ENCODE measurements at regions of chr16 and their contacts with region 1.

Region 1: DNA sequence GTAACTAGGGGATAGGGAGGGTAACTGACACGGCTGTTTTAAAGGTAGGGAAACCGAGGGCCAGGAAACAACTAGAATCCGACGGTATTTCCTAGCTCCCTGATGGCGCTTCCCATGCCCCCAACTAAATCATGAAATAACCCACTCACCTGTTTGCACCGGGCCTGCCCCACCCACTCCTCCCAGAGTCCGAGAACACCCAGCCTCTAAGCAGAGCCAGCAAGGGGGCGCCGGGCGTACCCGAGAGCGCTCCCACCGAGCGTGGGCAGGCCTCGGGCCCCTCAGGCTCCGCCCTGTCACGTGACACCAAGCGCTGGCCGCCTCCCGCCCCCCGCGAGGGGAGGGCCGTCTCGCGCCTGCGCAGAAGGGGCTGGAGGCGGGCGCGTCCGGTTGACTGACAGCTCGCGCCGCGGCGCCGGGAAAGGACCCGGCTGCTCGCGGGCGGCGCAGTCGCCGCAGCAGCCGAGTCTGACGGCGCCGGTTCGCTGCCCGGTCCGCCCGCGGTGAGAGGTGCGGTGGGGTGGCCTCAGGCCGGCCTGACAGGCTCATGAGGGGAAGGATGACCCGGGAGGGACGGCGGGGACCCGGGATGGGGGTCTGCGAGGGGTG is at the start of gene KIAA0513:
- DNase-seq: peak; percentile 65
- ATAC-seq: peak; percentile 88
- H3K4me3 ChIP-seq: peak within 1 kb of the TSS; percentile 82
- H3K27ac ChIP-seq: peak within 1 kb of the TSS; percentile 6
- H3K4me1 ChIP-seq: peaks cover 20% of the 10 kb centered on the region
- H3K27me3 ChIP-seq: no peaks in the 10 kb centered on the region
- CTCF ChIP-seq: peak; percentile 11 to 42 (median 41); a peak in 4 of 6 replicates
- EP300 ChIP-seq: no peak
- POLR2A ChIP-seq: peak; percentile 90
- RAD21 ChIP-seq: no peak
- polyA plus RNA-seq, gene KIAA0513: 0.14 to 0.22 TPM

Region 2: GRCh38 chr16:85010931-85011845 is 16.3 kb before region 1 on chr16 and contains the start of gene ZDHHC7:
- CTCF ChIA-PET with region 1: interaction called, 22 read pairs
- POLR2A ChIA-PET with region 1: interaction called, 21 read pairs
- RAD21 ChIA-PET with region 1: interaction called, 7 read pairs
- SMC1A ChIA-PET with region 1: interaction called, 14 read pairs
- in situ Hi-C with region 1: no loop called
- intact Hi-C with region 1: no loop called
- DNase-seq: peak; percentile 45
- ATAC-seq: peak; percentile 93
- H3K4me3 ChIP-seq: peak within 1 kb of the TSS; percentile 90
- H3K27ac ChIP-seq: peak within 1 kb of the TSS; percentile 95
- H3K4me1 ChIP-seq: peaks cover 5% of the 10 kb centered on the region; the same call in 1 of the 2 replicates
- H3K27me3 ChIP-seq: no peaks in the 10 kb centered on the region
- CTCF ChIP-seq: peak in 1 of 3 experiments; percentile 10; a peak in 1 of 6 replicates
- EP300 ChIP-seq: 0 out of 4 replicates have a peak, but pooled peaks of 1 of the 2 experiments have one; percentile 12
- POLR2A ChIP-seq: peak; percentile 94
- RAD21 ChIP-seq: no peak
- polyA plus RNA-seq, gene ZDHHC7: 0.87 to 2.8 TPM

Region 3: DNA sequence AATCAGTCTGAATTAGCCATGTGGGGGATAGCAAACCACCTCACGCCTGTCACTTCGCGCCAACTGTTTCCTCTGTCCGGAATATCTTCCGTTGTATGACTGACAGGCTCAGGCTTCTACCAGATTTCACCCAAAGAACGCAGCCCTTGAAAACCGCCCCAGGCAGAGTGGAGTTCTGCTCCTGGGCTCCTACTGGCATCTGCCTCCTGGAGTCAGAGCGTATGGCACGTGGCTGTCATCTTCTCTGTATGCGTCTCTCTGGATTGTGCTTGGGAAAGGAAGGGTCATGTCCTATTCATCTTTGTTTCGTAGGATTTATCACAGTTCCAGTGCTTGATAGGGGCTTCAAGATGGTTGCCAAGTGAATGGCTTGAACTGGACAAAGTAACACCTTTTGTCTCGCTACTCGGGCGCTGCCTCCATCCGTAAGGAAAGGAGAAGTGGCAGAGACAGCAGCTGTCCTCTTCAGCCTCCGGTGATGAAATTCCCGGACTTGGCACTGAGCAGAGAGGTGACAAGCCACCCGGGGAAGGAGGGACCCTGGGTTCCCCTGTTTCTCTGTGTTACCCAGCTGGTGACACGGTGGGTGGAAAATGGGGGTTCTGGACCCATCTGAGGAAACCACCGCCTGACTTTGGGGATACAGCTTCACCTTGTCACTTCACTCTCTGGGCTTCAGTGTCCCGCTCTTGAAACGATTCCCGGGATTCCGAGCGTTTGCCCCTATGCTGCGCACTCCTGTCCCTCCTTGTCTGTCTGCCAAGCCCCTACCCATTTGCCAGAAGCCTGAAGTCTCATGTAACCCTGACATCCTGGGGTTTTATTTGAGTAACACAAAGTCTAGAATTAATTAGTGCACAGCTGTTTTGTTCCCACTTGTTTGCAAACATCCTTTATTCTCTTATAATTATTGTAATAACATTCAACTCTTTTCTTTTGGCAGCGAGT is 14.0 kb after region 1 on chr16:
- CTCF ChIA-PET with region 1: no interaction called
- POLR2A ChIA-PET with region 1: no interaction called
- RAD21 ChIA-PET with region 1: no interaction called
- SMC1A ChIA-PET with region 1: no interaction called
- in situ Hi-C with region 1: no loop called
- intact Hi-C with region 1: no loop called
- DNase-seq: no peak
- ATAC-seq: no peak
- H3K4me3 ChIP-seq: no peak overlapping the region
- H3K27ac ChIP-seq: no peak overlapping the region
- H3K4me1 ChIP-seq: no peaks in the 10 kb centered on the region
- H3K27me3 ChIP-seq: no peaks in the 10 kb centered on the region; a peak in 1 of 4 replicates
- CTCF ChIP-seq: no peak
- EP300 ChIP-seq: no peak
- POLR2A ChIP-seq: no peak
- RAD21 ChIP-seq: no peak

Region 4: DNA sequence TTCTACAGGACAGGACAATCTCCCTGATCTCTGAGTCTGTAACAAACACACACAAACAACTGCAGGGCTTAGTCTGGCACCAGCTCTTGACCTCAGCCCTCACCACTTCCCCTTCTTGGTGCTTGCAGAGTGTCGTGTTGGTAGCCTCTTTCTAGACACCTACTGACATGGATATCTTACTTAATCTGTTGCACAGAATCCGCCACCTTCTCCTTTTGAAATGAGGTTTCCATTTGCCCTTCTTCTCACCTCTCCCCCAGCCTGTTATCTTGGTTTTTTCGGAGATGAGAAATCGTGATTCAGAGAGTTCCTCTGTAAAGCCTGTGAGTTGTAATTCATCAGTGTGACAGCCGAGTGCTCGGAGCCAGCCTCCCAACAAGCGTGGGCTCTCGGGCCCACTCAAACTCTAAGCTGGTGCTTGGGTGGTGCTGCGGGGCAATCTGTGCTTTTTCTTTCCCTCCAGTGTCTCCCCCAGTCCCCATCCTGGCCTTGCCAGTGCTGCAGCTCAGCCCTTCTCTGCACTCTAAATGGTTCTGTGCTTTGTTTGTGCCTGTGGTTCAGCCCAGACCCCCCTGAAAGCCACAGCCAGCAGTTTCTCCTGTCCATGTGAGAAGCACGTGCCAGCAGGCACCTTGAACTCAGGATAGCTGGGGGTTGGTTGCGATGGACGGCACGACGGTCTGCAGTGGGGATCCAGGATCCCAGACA is 28.2 kb after region 1 on chr16:
- CTCF ChIA-PET with region 1: interaction called, 15 read pairs
- POLR2A ChIA-PET with region 1: interaction called, 4 read pairs
- RAD21 ChIA-PET with region 1: interaction called, 5 read pairs
- SMC1A ChIA-PET with region 1: interaction called, 8 read pairs
- in situ Hi-C with region 1: no loop called
- intact Hi-C with region 1: loop called (anchors 2 kb)
- DNase-seq: peak; percentile 92
- ATAC-seq: peak; percentile 97
- H3K4me3 ChIP-seq: peak overlapping the region; percentile 51; the same call in 1 of the 2 replicates
- H3K27ac ChIP-seq: peak overlapping the region; percentile 79
- H3K4me1 ChIP-seq: peaks cover 37% of the 10 kb centered on the region
- H3K27me3 ChIP-seq: no peaks in the 10 kb centered on the region
- CTCF ChIP-seq: no peak
- EP300 ChIP-seq: peak; percentile 47 to 60; a peak in 1 of 4 replicates
- POLR2A ChIP-seq: peak; percentile 62; the same call in 1 of the 2 replicates
- RAD21 ChIP-seq: no peak

Region 5: DNA sequence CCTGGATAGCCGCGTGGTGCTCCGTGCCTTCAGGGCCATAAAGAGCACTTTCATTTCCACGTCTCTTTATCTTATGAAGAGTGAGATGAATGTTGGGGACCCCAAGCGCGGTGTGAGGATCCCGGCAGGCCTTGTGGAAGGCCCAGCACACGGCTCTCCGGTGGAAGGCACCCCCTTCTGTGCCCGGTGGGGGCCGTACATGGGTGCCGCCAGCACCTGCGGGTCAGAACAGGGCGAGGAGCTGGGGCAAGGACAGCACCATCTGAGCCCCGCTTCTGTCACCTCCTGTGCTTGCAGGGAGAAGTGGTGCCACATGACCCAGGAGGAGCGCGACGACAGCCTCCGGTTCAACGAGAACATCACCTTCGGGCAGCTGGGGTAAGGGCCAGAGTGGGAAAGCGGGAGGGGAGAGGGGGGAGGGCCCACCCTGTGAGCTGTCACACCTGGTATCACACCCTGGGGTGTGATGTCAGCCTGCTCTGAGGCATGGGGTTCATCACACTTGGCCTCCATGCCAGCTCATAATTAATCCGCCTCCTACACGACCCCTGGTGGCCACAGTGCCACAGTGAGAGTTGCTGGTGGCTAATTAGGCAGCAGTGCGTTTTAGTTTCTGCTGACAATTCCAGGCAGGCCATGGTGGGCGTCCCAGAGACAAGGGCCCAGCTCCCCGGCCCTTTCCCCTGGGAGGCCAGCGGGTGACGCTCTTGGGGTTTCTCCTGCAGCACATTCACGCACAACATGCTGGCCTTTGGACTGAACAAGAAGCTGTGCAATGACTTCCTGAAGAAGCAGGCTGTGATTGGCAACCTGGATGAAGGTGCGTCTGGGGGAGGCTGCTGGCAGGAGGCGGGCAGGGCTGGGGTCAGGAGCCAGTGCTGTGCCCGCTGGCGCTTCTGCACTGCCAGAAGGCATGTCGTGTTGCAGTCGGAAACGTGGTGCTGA is 59.2 kb after region 1 on chr16:
- CTCF ChIA-PET with region 1: interaction called, 29 read pairs
- POLR2A ChIA-PET with region 1: no interaction called
- RAD21 ChIA-PET with region 1: interaction called, 6 read pairs
- SMC1A ChIA-PET with region 1: interaction called, 3 read pairs
- in situ Hi-C with region 1: no loop called
- intact Hi-C with region 1: loop called (anchors 5 kb)
- DNase-seq: no peak
- ATAC-seq: peak; percentile 91
- H3K4me3 ChIP-seq: no peak overlapping the region
- H3K27ac ChIP-seq: no peak overlapping the region
- H3K4me1 ChIP-seq: peaks cover 30% of the 10 kb centered on the region
- H3K27me3 ChIP-seq: no peaks in the 10 kb centered on the region
- CTCF ChIP-seq: peak; percentile 75 to 81 (median 79)
- EP300 ChIP-seq: no peak
- POLR2A ChIP-seq: no peak
- RAD21 ChIP-seq: peak; percentile 82

Region 6: DNA sequence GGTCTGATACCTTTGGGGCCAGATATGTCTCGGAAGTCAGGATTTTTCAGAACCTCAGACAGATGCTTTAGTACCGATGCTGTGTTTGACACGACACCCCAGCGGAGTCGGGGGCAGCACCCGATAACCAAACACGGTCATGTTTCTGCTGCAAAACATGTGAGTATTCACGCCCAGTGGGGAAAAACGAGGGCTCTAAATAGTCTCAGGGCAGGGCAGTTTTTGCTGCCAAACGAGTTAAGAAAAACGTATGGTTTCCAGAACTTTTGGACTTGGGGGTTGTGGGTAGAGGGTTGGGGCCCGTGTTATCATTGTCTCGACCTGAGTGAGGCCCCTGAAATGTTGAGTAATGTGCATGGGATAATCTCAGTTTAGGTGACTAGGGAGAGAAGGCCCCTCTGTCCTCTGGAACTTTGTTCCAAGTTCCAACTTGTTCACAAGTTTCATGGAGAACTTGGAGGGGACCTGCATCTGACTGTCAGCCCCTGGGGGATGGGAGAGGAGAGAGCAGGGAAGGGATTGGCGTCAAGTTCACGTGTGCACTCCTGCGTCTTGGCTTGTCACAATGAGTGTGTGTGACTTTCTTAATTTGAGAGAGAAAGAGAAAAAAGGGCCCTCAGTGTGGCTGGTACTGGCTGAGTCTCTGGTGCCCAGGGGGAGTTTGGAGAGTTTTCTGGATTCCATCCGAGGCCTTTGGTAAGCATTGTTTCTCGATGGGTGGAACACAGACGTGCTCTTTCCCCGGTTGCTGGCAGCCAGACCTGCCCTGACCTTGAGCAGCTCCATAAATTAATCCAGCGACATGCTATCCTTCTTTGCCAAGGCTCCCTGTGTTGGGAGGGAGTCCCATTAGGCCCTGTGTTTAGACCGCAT is 168.7 kb after region 1 on chr16:
- CTCF ChIA-PET with region 1: no interaction called
- POLR2A ChIA-PET with region 1: no interaction called
- RAD21 ChIA-PET with region 1: no interaction called
- SMC1A ChIA-PET with region 1: no interaction called
- in situ Hi-C with region 1: no loop called
- intact Hi-C with region 1: no loop called
- DNase-seq: no peak
- ATAC-seq: no peak
- H3K4me3 ChIP-seq: no peak overlapping the region
- H3K27ac ChIP-seq: no peak overlapping the region
- H3K4me1 ChIP-seq: no peaks in the 10 kb centered on the region
- H3K27me3 ChIP-seq: no peaks in the 10 kb centered on the region
- CTCF ChIP-seq: no peak
- EP300 ChIP-seq: no peak
- POLR2A ChIP-seq: no peak
- RAD21 ChIP-seq: no peak

Region 7: DNA sequence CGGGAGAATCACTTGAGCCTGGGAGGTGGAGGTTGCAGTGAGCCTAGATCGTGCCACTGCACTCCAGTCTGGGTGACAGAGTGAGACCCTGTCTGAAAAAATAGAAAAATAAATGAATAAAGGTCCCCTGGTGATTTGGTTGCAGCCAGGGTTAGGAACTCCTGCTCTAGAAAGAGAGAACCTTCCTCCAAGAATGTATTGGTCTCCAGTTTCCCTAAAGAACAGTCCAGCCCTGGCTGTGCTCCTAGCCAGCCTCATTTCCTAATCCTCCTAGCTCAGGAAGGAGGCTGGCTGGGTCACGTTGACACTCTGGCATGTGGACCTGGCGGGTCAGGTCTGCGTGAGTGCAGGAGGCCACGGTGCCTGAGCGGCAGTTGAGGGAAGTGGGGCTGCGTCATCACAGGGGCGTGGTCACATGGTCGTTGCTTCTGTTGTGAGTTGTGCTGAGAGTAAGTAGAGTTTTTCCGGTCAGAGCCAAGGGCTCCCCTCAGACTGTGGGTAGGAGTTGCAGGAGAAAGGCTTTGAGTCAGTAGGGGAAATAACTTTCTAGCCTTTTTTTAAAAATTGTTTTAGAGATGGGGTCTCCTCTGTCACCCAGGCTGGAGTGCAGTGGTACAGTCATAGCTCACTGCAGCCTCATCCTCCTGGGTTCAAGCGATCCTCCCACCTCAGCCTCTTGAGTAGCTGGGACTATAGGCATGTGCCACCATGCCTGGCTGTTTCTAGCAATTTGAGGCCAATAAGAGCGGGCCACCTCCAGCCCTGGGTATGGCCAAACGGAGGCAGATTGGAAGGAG is 278.7 kb after region 1 on chr16:
- CTCF ChIA-PET with region 1: no interaction called
- POLR2A ChIA-PET with region 1: no interaction called
- RAD21 ChIA-PET with region 1: no interaction called
- SMC1A ChIA-PET with region 1: no interaction called
- in situ Hi-C with region 1: no loop called
- intact Hi-C with region 1: no loop called
- DNase-seq: peak; percentile 30
- ATAC-seq: peak; percentile 69
- H3K4me3 ChIP-seq: no peak overlapping the region
- H3K27ac ChIP-seq: no peak overlapping the region
- H3K4me1 ChIP-seq: peaks cover 22% of the 10 kb centered on the region
- H3K27me3 ChIP-seq: peaks cover 0 to 2% of the 10 kb centered on the region in 2 experiments; a peak in 1 of 4 replicates
- CTCF ChIP-seq: no peak
- EP300 ChIP-seq: no peak
- POLR2A ChIP-seq: no peak; the same call in 1 of the 2 replicates
- RAD21 ChIP-seq: no peak

Region 8: DNA sequence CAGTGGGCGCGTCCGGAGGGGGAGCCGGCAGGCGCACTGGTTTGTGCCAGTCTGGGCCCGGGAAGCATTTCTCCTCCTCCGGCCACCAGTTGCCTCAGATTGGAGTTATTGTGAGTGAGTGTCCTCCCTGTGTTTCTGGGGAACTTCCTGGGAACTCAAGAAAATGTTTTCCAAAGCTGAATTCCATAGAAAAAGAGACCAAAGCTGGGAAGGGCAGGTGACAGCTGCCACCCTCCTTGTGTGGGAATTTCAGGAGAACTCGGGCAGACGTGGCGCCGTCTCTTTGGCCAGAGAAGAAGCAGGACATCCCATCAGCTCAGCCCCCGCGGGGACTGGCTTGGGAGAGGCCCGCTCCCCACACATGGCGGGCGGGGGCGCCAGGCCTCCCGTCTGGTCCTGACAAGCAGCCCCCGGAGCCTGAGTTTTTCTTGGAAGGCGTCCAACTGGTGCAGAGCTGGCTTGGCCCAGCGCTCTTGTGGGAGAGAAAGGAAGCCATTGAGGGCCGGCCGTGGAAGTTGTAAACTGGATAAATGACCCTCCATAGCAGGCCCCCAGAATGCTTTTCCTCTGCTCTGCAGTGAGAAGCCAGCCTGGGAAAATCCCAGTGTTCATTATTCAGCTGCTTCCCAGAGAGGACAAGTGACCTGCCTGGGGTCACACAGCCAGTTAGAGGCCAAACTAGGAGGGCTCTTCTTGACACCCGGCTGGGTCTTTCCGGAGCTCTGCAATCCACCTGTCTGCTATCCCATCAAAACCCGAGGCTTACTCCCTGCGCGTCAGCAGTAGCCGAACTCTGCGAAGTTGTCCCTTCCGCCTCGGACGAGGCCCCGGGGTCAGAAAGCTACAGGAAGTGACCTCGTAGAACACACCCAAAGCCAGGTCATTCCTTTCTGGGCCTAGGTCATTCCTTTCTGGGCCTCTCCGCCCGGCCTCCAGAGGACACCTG is 546.5 kb after region 1 on chr16:
- CTCF ChIA-PET with region 1: no interaction called
- POLR2A ChIA-PET with region 1: no interaction called
- RAD21 ChIA-PET with region 1: no interaction called
- SMC1A ChIA-PET with region 1: no interaction called
- in situ Hi-C with region 1: no loop called
- intact Hi-C with region 1: no loop called
- DNase-seq: no peak
- ATAC-seq: no peak
- H3K4me3 ChIP-seq: no peak overlapping the region
- H3K27ac ChIP-seq: no peak overlapping the region
- H3K4me1 ChIP-seq: peaks cover 35% of the 10 kb centered on the region
- H3K27me3 ChIP-seq: no peaks in the 10 kb centered on the region
- CTCF ChIP-seq: no peak
- EP300 ChIP-seq: no peak
- POLR2A ChIP-seq: no peak
- RAD21 ChIP-seq: no peak

Measured in GM12878 (cell line).